Colonic mucosa (tissue), 4 donors: ENCODE measurements at regions of chr18 and their contacts with region 1.

Region 1: DNA sequence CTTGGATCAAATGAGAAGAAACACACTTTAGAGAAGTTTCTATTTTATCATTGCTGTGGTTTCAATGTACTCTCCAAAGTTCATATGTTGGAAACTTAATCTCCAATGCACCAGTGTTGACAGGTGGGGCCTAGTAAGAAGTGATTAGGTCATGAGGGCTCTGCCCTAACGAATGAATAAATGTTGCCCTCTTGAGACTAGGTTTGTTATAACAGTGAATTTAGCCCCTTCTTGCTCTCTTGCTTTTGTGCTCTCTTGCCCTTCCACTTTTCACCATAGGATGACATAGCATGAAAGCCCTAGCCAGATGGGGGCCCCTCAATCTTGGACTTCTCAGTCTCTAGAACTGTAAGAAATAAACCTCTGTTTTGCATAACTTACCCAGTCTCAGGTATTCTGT is 664.8 kb downstream of the DCC start:
- DNase-seq: no peak
- H3K4me3 ChIP-seq: no peak overlapping the region
- H3K27ac ChIP-seq: no peak overlapping the region
- H3K4me1 ChIP-seq: no peaks in the 10 kb centered on the region
- H3K27me3 ChIP-seq: no peaks in the 10 kb centered on the region
- CTCF ChIP-seq: no peak

Region 2: GRCh38 chr18:52716973-52717372 is 287.8 kb before region 1 on chr18:
- intact Hi-C with region 1: loop called (anchors 10 kb)
- DNase-seq: peak; percentile 54
- H3K4me3 ChIP-seq: no peak overlapping the region
- H3K27ac ChIP-seq: no peak overlapping the region
- H3K4me1 ChIP-seq: no peaks in the 10 kb centered on the region
- H3K27me3 ChIP-seq: no peaks in the 10 kb centered on the region
- CTCF ChIP-seq: peak; percentile 36